Mammary epithelial cell (primary cell): ENCODE measurements at regions of chr1 and their contacts with region 1.

Region 1: DNA sequence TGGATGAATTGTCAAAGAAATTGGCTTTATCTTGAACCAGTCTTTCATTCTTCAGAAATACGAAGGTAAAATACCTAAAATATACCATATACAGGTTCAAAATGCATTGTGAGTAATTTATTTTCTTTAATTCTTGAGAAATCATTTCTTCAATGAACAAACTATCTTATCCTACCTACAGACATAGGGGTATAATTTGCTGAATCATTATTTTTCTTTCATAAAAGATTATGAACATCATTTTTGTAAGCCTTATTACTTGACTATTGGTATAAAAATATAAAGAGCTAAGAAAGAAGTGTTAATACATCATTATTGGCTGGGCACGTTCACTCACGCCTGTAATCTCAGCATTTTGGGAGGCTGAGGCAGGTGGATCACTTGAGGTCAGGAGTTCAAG is 167.7 kb downstream of the DNAH14 start:
- DNase-seq: no peak
- H3K4me3 ChIP-seq: no peak overlapping the region
- H3K27ac ChIP-seq: no peak overlapping the region
- H3K4me1 ChIP-seq: no peaks in the 10 kb centered on the region
- H3K27me3 ChIP-seq: no peaks in the 10 kb centered on the region
- CTCF ChIP-seq: no peak

Region 2: DNA sequence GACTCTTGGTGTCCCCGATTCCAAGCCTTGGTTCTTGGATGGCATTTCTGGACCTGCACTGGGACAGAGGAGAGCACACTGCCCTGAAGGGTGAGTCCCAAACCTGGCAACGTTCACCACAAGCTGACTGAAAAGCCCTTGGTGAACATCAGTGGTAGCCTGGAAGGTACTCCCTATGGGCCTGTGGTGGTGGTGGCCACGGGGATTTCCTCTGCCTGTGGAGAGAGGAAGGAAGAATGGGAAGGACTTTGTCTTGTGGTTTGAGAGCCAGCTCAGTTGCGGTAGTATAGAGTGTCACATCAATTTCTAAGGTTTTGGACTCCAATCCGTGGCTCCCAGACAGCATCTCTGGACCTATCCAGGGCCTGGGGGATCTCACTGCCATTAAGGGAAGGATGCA is 117.0 kb before region 1 on chr1:
- CTCF ChIA-PET with region 1: no interaction called
- dilution Hi-C with region 1: no loop called
- in situ Hi-C with region 1: loop called in 1 of 2 experiments (anchors 25 kb)
- intact Hi-C with region 1: no loop called
- DNase-seq: no peak
- H3K4me3 ChIP-seq: no peak overlapping the region
- H3K27ac ChIP-seq: no peak overlapping the region
- H3K4me1 ChIP-seq: no peaks in the 10 kb centered on the region
- H3K27me3 ChIP-seq: no peaks in the 10 kb centered on the region
- CTCF ChIP-seq: no peak